ENCODE measurements at regions of chrX and their contacts with region 1.

Region 1: GRCh38 chrX:120452131-120452530 is 17.0 kb downstream of the LAMP2 start:
- DNase-seq: peak in 1 of 2 experiments; percentile 43
- H3K4me3 ChIP-seq: no peak overlapping the region
- H3K27ac ChIP-seq: no peak overlapping the region
- H3K4me1 ChIP-seq: no peaks in the 10 kb centered on the region
- H3K27me3 ChIP-seq: no peaks in the 10 kb centered on the region
- CTCF ChIP-seq: peak in 2 of 3 experiments; percentile 44 to 51; a peak in 3 of 4 replicates
- EP300 ChIP-seq: no peak
- POLR2A ChIP-seq: no peak
- RAD21 ChIP-seq: peak; percentile 43 to 57

Region 2: DNA sequence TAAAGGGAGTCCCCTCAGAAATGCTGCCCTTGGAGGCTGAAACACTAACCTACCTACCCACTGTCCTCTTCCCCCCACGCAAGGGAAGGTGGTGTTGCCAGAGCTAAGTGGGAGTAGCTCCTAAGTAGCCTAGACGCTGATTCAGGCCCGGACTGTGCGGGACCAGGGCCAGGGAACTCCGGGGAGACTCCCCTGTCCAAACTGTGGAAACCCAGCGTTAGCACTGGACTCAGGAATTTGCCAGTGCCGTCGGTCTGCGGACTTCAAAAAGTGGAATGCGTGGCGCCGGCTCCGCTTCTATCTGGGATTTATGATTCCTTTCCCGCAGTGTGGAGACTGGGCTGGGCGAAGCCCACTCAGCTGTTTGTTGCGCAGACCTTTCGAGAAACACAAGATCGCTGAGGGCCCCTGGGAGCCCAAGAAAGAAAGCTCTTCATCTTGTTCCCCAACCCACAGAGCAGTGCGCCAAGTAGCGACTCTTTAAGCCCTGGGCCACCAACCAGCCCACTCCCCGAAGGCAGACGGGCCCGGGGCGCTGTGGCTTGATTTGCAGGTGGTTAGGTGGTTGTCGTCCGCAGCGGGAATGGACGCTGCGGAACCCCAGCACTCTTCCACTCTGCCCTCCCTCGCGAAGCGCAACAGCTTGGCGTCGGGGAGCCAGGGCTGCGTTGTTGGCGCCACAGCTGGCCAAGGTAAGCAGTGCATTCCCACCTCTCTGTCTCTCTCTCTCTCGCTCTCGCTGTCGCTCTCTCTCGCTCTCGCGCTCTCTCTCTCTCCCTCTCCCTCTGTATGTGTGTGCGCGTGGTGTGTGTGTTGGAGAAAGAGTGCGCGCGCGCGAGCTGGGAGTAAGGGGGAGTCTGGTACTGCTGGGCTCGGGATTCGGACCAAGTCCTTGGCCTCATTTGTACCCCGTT is 142.9 kb before region 1 on chrX:
- CTCF ChIA-PET with region 1: interaction called, 12 read pairs
- POLR2A ChIA-PET with region 1: no interaction called
- DNase-seq: peak in 1 of 2 experiments; percentile 52
- H3K4me3 ChIP-seq: peak overlapping the region; percentile 43 to 71 (median 52); a peak in 7 of 8 replicates
- H3K27ac ChIP-seq: no peak overlapping the region
- H3K4me1 ChIP-seq: peaks cover 0 to 5% (median 3%) of the 10 kb centered on the region in 4 experiments; a peak in 3 of 7 replicates
- H3K27me3 ChIP-seq: peaks cover 4 to 63% (median 47%) of the 10 kb centered on the region in 4 experiments
- CTCF ChIP-seq: peak; percentile 42 to 80 (median 72); a peak in 3 of 4 replicates
- EP300 ChIP-seq: no peak
- POLR2A ChIP-seq: no peak
- RAD21 ChIP-seq: peak in 1 of 2 experiments; percentile 13; a peak in 1 of 4 replicates

Region 3: GRCh38 chrX:120321520-120322281 is 130.4 kb before region 1 on chrX:
- CTCF ChIA-PET with region 1: interaction called, 13 read pairs
- POLR2A ChIA-PET with region 1: no interaction called
- DNase-seq: no peak
- H3K4me3 ChIP-seq: no peak overlapping the region
- H3K27ac ChIP-seq: no peak overlapping the region
- H3K4me1 ChIP-seq: no peaks in the 10 kb centered on the region
- H3K27me3 ChIP-seq: no peaks in the 10 kb centered on the region
- CTCF ChIP-seq: no peak
- EP300 ChIP-seq: no peak
- POLR2A ChIP-seq: no peak
- RAD21 ChIP-seq: no peak

Region 4: DNA sequence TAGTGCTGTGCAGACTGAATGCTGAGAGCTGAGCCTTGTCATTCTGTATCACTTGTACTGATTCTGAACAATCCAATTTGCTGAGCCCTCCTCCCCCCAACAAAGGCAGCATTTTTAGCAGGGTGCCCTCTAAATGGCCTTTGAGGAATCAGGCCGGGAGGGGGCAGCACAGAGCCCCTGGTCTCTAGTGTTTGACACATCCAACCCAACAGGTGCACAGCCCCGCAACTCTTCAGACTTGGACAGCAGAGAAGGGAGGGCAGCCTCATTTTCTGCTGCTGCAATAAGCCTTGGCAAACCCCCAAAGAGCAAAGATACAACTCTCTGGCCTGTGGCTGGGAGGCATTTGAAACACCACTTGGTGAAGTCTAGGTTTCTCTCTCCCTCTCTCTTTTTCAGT is 86.8 kb before region 1 on chrX:
- CTCF ChIA-PET with region 1: interaction called, 13 read pairs
- POLR2A ChIA-PET with region 1: no interaction called
- DNase-seq: peak in 1 of 2 experiments; percentile 81
- H3K4me3 ChIP-seq: no peak overlapping the region
- H3K27ac ChIP-seq: no peak overlapping the region
- H3K4me1 ChIP-seq: no peaks in the 10 kb centered on the region
- H3K27me3 ChIP-seq: no peaks in the 10 kb centered on the region
- CTCF ChIP-seq: peak; percentile 43 to 63 (median 63)
- EP300 ChIP-seq: no peak
- POLR2A ChIP-seq: no peak
- RAD21 ChIP-seq: peak; percentile 42 to 49

Region 5: DNA sequence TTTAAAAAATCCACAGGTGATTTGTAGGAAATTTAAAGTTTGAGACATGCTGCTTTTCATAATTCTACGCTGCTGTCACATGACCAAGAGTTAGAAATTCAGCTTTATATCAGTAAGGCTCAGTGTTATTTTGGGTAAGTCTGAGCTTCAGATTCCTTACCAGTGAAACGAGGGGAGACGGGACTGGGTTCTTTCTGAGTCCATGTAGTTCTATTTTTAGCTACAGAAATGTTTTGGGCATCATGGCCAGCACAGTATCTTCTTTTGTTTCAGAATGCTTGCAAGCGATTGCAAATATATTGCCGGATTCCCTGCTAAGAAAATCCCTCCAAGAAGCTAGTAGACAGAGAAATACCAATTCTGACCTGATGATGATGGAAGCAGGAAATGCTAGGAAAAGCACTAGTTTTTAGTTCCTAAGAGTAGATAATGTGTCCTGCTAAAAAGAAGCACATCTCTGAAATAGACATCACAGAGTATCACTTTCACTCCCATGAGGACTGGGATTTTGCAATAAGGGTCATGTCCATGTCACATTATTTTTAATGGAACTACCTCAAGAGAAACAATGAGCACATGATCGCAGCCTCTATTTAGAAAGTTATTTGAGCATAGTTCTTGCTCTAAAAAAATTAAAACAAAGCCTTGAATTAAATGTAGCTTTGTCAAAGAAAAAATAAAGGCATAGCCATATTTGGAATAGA is 79.3 kb before region 1 on chrX:
- CTCF ChIA-PET with region 1: interaction called, 42 read pairs
- POLR2A ChIA-PET with region 1: no interaction called
- DNase-seq: no peak
- H3K4me3 ChIP-seq: no peak overlapping the region
- H3K27ac ChIP-seq: no peak overlapping the region
- H3K4me1 ChIP-seq: no peaks in the 10 kb centered on the region; a peak in 2 of 7 replicates
- H3K27me3 ChIP-seq: no peaks in the 10 kb centered on the region
- CTCF ChIP-seq: no peak
- EP300 ChIP-seq: no peak
- POLR2A ChIP-seq: no peak
- RAD21 ChIP-seq: no peak

Region 6: DNA sequence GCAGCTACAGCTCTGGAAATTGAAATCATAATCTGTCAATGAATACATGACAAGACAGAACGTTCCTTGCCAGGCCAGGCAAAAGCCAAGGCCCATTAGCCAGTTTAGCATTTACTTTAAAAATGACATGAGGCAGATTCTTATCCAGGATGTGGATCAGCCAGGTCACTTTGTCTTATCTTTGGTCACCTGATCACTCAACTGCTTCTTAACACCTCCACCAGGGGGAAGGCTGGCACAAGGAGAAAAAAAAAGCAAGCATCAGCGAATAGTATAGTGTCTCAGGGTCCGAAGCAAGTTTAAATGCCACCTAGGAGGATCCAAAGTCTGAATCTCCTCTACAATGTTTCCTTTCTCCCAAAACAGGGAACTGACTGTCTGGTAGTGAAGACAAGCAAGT is 71.4 kb before region 1 on chrX:
- CTCF ChIA-PET with region 1: interaction called, 42 read pairs
- POLR2A ChIA-PET with region 1: no interaction called
- DNase-seq: no peak
- H3K4me3 ChIP-seq: no peak overlapping the region
- H3K27ac ChIP-seq: no peak overlapping the region
- H3K4me1 ChIP-seq: no peaks in the 10 kb centered on the region; a peak in 2 of 7 replicates
- H3K27me3 ChIP-seq: no peaks in the 10 kb centered on the region
- CTCF ChIP-seq: peak in 2 of 3 experiments; percentile 57 to 62; a peak in 3 of 4 replicates
- EP300 ChIP-seq: no peak
- POLR2A ChIP-seq: no peak
- RAD21 ChIP-seq: peak; percentile 61 to 73

Region 7: GRCh38 chrX:120653000-120653399 is 200.9 kb after region 1 on chrX:
- CTCF ChIA-PET with region 1: no interaction called
- POLR2A ChIA-PET with region 1: no interaction called
- DNase-seq: no peak
- H3K4me3 ChIP-seq: no peak overlapping the region
- H3K27ac ChIP-seq: no peak overlapping the region
- H3K4me1 ChIP-seq: no peaks in the 10 kb centered on the region
- H3K27me3 ChIP-seq: no peaks in the 10 kb centered on the region
- CTCF ChIP-seq: no peak
- EP300 ChIP-seq: no peak
- POLR2A ChIP-seq: no peak
- RAD21 ChIP-seq: no peak

Measured in H1 (cell line).